ENCODE measurements at regions of chr18 and their contacts with region 1.

Region 1: GRCh38 chr18:79393635-79394533 is 1.8 kb upstream of the NFATC1 start:
- DNase-seq: peak; percentile 94
- H3K4me3 ChIP-seq: peak overlapping the region; percentile 28 to 38 (median 35)
- H3K27ac ChIP-seq: peak overlapping the region; percentile 87
- H3K4me1 ChIP-seq: peaks cover 34% of the 10 kb centered on the region
- H3K27me3 ChIP-seq: peaks cover 0 to 6% of the 10 kb centered on the region in 2 experiments
- CTCF ChIP-seq: no peak
- POLR2A ChIP-seq: peak; percentile 54

Region 2: DNA sequence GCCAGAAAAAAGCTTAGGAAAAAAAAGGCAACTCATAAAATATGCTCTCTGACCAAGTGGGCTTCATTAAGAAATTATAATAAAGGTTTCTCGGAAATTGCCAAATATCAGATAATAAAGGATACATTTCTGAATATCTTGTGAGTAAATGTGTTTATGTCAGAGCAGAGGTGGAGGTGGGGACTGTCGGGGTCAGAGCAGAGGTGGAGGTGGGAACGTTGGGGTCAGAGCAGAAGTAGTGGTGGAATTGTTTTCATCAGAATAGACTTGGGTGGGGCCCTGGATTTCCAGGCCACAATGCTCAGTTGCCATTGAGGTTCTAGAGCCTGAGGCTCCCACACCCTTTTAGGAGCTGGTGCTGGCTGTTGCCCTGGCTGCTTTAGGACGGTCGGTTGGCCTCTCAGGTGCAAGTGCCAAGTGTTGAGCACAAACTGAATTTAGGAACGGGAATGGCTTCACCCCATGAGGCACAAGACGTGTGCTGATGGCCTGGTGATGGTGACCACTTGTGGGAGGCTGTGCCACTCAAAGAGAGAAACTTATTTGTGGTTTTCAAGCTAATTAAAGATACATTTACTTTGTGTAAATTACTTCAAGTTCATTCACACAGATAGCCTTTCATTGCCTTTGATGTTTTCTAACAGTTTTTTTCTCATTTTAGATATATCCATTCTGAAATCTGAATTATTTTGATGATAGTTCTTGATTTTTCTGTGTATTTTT is 193.2 kb before region 1 on chr18:
- CTCF ChIA-PET with region 1: no interaction called
- POLR2A ChIA-PET with region 1: no interaction called
- dilution Hi-C with region 1: no loop called
- intact Hi-C with region 1: no loop called
- DNase-seq: peak; percentile 9
- H3K4me3 ChIP-seq: no peak overlapping the region
- H3K27ac ChIP-seq: no peak overlapping the region
- H3K4me1 ChIP-seq: no peaks in the 10 kb centered on the region
- H3K27me3 ChIP-seq: no peaks in the 10 kb centered on the region
- CTCF ChIP-seq: no peak
- POLR2A ChIP-seq: no peak

Region 3: DNA sequence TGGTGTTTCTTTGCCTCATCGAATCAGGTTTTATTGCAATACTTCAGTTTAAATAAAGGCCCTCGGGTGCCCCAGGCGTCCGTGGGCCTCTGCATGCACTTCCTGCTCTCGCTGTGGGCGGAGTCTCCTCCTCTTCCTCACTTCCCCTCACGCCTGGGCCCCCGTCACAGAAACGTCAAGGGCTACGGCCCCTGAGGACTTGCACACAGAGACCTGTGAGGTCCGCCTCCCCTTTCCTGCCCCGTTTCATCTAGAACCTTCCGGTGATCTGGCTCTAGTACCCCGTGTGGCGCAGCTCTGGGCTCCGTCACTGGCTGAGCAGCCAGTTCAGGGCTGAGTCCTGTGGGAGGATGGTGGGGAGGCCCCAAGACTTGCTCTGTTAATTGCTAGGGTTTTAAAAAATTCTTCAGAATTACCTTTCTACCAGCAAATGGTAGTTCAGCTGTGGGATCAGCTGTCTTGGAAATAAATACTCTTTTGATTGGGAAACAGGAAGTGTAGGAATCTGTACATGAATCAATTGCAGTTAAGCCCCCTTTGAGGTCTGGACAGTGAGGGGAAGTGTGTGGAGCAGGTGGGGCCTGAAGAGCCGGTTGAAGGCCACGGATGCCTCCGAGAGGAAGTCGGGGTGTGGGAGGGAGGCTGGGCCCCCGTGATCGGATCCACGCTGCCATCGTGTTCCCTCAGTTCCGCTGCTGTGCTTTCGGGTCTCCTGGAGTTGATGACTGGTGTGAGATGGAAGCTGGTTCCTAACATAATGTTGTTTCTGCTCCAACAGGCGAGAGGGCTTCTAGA is 12.1 kb after region 1 on chr18:
- CTCF ChIA-PET with region 1: interaction called, 12 read pairs
- POLR2A ChIA-PET with region 1: interaction called, 6 read pairs
- dilution Hi-C with region 1: no loop called
- intact Hi-C with region 1: no loop called
- DNase-seq: peak; percentile 44
- H3K4me3 ChIP-seq: no peak overlapping the region
- H3K27ac ChIP-seq: peak overlapping the region; percentile 56
- H3K4me1 ChIP-seq: peaks cover 34% of the 10 kb centered on the region
- H3K27me3 ChIP-seq: no peaks in the 10 kb centered on the region
- CTCF ChIP-seq: no peak
- POLR2A ChIP-seq: no peak

Region 4: GRCh38 chr18:79420033-79420745 is 26.3 kb after region 1 on chr18:
- CTCF ChIA-PET with region 1: no interaction called
- POLR2A ChIA-PET with region 1: no interaction called
- dilution Hi-C with region 1: no loop called
- intact Hi-C with region 1: no loop called
- DNase-seq: no peak
- H3K4me3 ChIP-seq: no peak overlapping the region
- H3K27ac ChIP-seq: no peak overlapping the region
- H3K4me1 ChIP-seq: no peaks in the 10 kb centered on the region
- H3K27me3 ChIP-seq: no peaks in the 10 kb centered on the region
- CTCF ChIP-seq: no peak
- POLR2A ChIP-seq: no peak

Region 5: GRCh38 chr18:79458131-79458838 is 64.4 kb after region 1 on chr18:
- CTCF ChIA-PET with region 1: interaction called, 6 read pairs
- POLR2A ChIA-PET with region 1: interaction called, 4 read pairs
- dilution Hi-C with region 1: no loop called
- intact Hi-C with region 1: loop called (anchors 1 kb)
- DNase-seq: peak; percentile 93
- H3K4me3 ChIP-seq: no peak overlapping the region
- H3K27ac ChIP-seq: peak overlapping the region; percentile 98
- H3K4me1 ChIP-seq: peaks cover 40% of the 10 kb centered on the region
- H3K27me3 ChIP-seq: no peaks in the 10 kb centered on the region
- CTCF ChIP-seq: no peak
- POLR2A ChIP-seq: peak; percentile 66

Region 6: GRCh38 chr18:79484661-79485621 is 91.1 kb after region 1 on chr18:
- CTCF ChIA-PET with region 1: interaction called, 6 read pairs
- POLR2A ChIA-PET with region 1: interaction called, 3 read pairs
- dilution Hi-C with region 1: no loop called
- intact Hi-C with region 1: loop called (anchors 1 kb)
- DNase-seq: peak; percentile 94
- H3K4me3 ChIP-seq: no peak overlapping the region
- H3K27ac ChIP-seq: peak overlapping the region; percentile 97
- H3K4me1 ChIP-seq: peaks cover 19% of the 10 kb centered on the region
- H3K27me3 ChIP-seq: no peaks in the 10 kb centered on the region
- CTCF ChIP-seq: no peak
- POLR2A ChIP-seq: peak; percentile 70

Region 7: DNA sequence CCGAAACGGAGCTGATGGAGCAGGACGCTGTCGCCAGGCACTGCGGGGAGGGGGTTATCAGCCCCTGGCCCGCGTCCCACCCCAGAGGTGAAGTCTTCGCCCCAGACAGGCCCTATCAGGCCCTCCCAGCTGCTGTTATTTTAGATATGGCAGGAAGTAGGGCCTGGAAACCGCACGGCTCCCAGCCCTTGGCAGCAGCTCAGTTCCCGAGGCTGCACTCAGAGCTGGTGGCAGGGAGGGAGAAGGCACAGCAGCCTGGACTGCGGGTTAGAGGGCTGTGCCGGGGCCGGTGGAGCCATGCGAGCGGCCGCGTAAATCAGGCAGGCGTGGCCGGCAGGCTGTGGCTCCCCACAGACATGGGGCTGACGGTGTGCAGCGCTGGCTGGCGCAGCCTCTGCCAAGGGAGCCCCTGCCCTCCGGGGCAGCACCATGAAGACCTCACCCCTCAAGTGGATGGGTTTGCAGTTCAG is 113.2 kb after region 1 on chr18:
- CTCF ChIA-PET with region 1: interaction called, 32 read pairs
- POLR2A ChIA-PET with region 1: interaction called, 6 read pairs
- dilution Hi-C with region 1: no loop called
- intact Hi-C with region 1: loop called (anchors 1 kb)
- DNase-seq: peak; percentile 96
- H3K4me3 ChIP-seq: no peak overlapping the region
- H3K27ac ChIP-seq: peak overlapping the region; percentile 88
- H3K4me1 ChIP-seq: peaks cover 31% of the 10 kb centered on the region
- H3K27me3 ChIP-seq: no peaks in the 10 kb centered on the region
- CTCF ChIP-seq: no peak
- POLR2A ChIP-seq: peak; percentile 66

Region 8: DNA sequence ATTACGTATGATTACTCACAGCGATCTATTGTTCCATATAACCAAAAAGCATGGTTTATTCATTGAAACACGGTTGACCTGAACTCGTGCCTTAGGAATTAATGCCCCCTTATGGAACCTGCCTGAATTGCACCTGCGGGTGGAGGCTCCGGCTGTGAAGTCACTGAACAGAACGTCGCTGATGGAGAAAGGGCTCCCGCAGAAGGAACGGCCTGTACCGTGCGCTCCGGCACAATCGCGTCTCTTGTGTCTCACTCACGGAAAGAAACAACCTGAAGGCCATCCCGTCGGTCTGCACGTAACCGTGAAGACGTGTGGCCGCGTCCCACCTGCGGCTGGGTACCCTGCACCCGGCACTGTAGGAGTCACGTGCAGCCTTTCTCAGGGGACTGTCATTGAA is 135.0 kb after region 1 on chr18:
- CTCF ChIA-PET with region 1: interaction called, 30 read pairs
- POLR2A ChIA-PET with region 1: no interaction called
- dilution Hi-C with region 1: no loop called
- intact Hi-C with region 1: loop called (anchors 1 kb)
- DNase-seq: peak; percentile 80
- H3K4me3 ChIP-seq: no peak overlapping the region
- H3K27ac ChIP-seq: no peak overlapping the region
- H3K4me1 ChIP-seq: peaks cover 7% of the 10 kb centered on the region
- H3K27me3 ChIP-seq: no peaks in the 10 kb centered on the region
- CTCF ChIP-seq: peak; percentile 82 to 86
- POLR2A ChIP-seq: no peak

Region 9: GRCh38 chr18:79560042-79560860 is 166.4 kb after region 1 on chr18:
- CTCF ChIA-PET with region 1: no interaction called
- POLR2A ChIA-PET with region 1: no interaction called
- dilution Hi-C with region 1: no loop called
- intact Hi-C with region 1: no loop called
- DNase-seq: no peak
- H3K4me3 ChIP-seq: no peak overlapping the region
- H3K27ac ChIP-seq: no peak overlapping the region
- H3K4me1 ChIP-seq: no peaks in the 10 kb centered on the region
- H3K27me3 ChIP-seq: no peaks in the 10 kb centered on the region
- CTCF ChIP-seq: no peak
- POLR2A ChIP-seq: no peak

Region 10: DNA sequence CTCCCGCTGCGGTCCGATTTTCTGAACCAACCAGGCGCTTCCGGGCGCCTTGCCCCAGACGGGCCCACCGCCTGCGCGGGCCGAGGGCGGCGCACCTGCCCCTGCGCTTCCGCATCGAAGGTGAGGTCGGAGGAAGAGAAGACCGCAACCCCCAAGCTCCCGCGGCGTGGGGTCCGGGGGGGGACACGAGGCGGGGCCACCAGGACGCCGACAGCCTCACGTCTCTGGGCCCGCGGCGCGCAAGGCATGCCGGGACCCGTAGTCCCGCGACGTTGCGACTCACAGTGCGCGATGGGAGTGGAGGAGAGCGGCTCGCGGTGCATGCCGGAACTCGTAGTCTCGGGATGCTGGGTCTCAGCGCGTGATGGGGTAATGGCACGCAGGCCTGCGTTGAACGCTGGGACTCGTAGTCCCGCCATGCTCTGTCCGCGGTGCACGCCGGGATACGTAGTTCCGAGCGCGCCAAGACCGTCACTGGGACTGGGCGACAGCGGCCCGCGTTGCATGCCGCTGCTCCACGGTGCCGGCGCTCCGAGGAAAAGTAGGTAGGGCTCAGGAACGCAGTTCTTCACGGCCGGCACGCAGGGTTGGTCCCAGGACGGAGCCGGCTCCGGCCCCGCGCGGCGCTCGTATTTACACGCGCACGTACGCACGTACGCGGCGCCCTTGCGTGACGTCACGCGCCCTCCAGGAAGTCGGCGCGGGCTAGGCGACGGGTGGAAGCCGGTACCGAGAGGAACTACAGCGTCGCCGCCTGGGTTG is 285.4 kb after region 1 on chr18 and contains the start of gene CTDP1:
- CTCF ChIA-PET with region 1: no interaction called
- POLR2A ChIA-PET with region 1: interaction called, 3 read pairs
- dilution Hi-C with region 1: no loop called
- intact Hi-C with region 1: loop called (anchors 2 kb)
- DNase-seq: peak; percentile 99
- H3K4me3 ChIP-seq: peak within 1 kb of the TSS; percentile 82 to 99 (median 83)
- H3K27ac ChIP-seq: peak within 1 kb of the TSS; percentile 73
- H3K4me1 ChIP-seq: peaks cover 16% of the 10 kb centered on the region
- H3K27me3 ChIP-seq: no peaks in the 10 kb centered on the region
- CTCF ChIP-seq: no peak
- POLR2A ChIP-seq: peak; percentile 25
- total RNA-seq, gene CTDP1: 23.5 and 27.6 TPM in 2 replicates

Region 11: DNA sequence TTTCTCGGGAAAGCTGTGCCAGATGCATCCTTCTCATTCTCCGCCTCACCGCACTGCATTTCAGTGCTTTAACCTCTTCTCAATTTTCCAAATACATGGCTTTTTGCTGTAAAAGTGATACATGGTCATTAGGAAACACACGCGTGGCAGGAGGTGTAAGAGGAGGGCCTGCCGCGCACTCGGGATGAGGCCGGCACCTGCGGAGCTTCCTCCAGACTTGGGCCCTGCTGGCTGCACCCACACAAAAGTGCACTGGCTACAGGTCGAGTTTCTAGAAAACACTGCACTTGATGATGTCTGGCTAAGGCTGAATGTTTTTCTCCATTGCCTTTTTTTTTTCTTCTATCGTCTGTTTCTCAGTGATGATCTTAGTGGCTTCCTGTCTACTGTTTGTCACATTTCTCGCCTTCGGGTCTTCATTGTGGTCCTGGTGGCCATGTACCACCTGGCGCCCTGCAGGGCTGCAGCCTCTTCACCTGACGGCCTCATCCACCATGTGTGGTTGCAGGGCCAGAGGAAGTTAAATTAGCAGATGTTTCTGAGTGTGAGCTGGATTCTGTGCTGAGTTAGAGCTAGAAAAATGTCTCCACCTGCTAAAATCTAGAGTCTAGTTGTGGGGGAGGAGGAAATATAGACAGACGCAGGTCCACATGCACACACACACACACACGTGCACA is 411.5 kb after region 1 on chr18:
- CTCF ChIA-PET with region 1: no interaction called
- POLR2A ChIA-PET with region 1: no interaction called
- dilution Hi-C with region 1: no loop called
- intact Hi-C with region 1: no loop called
- DNase-seq: no peak
- H3K4me3 ChIP-seq: no peak overlapping the region
- H3K27ac ChIP-seq: no peak overlapping the region
- H3K4me1 ChIP-seq: no peaks in the 10 kb centered on the region
- H3K27me3 ChIP-seq: no peaks in the 10 kb centered on the region
- CTCF ChIP-seq: no peak
- POLR2A ChIP-seq: no peak